ENCODE measurements at regions of chr11 and their contacts with region 1.

Region 1: DNA sequence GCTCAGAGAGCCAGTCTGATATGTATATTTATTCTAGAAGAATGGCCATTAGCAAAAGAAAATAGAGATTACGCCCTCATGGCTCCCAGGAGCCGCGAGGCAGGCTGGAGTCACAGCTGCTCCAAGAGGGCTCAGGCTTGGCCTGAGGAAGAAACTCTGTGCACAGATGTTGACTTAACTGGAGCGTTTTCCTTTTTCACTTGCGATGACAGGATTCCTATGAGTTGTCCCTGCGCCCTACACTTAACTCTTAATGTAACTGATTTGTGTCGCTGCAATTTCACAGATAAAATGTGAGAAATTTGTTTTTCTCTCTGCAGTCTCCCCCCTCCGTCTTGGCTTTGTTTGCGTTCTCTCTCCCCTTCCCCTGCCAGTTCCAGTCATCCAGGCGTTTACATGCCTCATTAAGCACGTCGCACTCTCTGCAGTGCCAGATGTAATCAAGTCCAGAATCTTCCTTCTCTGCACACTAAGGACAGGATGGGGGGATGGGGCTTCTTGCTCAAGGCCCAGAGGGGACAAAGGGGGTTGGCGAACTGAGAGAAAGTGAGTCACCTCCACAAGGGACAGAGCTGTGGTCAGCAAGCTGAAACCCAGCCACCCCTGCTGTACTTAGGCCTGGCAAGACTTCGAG is 1060.1 kb downstream of the NTM start:
- DNase-seq: no peak
- H3K4me3 ChIP-seq: no peak overlapping the region
- H3K27ac ChIP-seq: no peak overlapping the region
- H3K4me1 ChIP-seq: no peaks in the 10 kb centered on the region
- H3K27me3 ChIP-seq: no peaks in the 10 kb centered on the region
- CTCF ChIP-seq: no peak
- POLR2A ChIP-seq: no peak

Region 2: DNA sequence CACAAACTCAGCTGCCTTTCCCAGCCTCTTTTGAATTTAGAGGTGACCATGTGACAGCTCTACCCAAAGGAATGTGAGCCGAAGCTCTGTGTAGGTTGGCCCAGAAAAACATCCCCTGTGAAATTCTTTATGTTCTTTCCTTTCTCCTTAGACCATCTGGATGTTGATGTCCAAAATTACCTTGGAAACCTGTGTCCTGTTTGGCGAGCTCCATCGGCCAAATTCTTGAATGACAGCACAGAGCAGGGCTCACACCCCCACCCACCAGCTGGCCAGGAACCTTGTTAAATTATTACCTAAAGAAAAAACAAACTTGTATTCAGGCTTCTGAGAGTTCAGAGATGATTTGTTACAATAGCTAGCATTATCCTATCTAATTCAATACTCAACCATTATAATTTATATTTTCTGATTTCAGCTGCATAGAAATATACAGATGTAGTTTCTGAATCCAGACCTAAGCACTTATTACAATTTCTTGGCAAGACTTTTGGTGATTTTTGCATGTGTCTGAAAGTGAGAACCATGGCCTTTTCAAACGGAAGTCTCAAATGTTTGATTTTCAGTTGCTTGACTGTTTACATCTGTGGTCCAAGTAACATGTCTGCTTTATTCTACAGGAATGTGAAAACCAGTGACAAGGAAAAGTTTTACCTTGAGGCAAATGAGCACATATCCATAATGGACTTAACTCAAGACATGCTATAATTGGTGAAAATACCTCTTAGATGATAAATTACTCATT is 505.9 kb before region 1 on chr11:
- intact Hi-C with region 1: loop called (anchors 5 kb)
- DNase-seq: no peak
- H3K4me3 ChIP-seq: no peak overlapping the region
- H3K27ac ChIP-seq: no peak overlapping the region
- H3K4me1 ChIP-seq: no peaks in the 10 kb centered on the region
- H3K27me3 ChIP-seq: no peaks in the 10 kb centered on the region
- CTCF ChIP-seq: no peak
- POLR2A ChIP-seq: no peak

Region 3: DNA sequence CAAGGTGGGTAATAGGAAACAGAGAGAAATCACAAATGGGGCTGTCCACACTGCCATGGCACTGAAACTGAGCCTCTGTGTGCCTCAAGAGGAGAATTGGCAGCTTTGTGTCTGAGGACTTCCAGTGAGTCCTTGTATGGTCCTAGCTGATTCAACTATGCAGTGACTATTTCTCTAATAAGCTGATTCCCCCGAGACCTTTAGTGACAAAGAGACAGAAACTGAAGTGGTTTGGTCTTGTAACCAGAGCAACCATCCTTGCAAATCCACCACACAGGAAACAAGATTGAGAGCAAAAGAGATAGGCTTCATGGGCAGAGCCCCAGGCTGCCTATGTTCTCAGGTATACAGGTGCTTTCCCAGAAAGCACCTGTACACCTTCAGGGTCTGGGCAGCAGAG is 21.7 kb before region 1 on chr11:
- intact Hi-C with region 1: no loop called
- DNase-seq: no peak
- H3K4me3 ChIP-seq: no peak overlapping the region
- H3K27ac ChIP-seq: no peak overlapping the region
- H3K4me1 ChIP-seq: no peaks in the 10 kb centered on the region
- H3K27me3 ChIP-seq: peaks cover 0 to 16% of the 10 kb centered on the region in 2 donors
- CTCF ChIP-seq: no peak
- POLR2A ChIP-seq: no peak